Activated T-helper 1 cell treated with anti-CD3 and anti-CD28 coated beads, Interleukin-12 subunit alpha, Interleukin-12 subunit beta, Interleukin-2, Interleukin-4 antibody, amounts not matched to agents 30 ng/mL and 10 ng/mL and 1 ng/mL, durations not matched to agents 14 hours and 24 hours and 36 hours (primary cell): ENCODE measurements at regions of chr21 and their contacts with region 1.

Region 1: DNA sequence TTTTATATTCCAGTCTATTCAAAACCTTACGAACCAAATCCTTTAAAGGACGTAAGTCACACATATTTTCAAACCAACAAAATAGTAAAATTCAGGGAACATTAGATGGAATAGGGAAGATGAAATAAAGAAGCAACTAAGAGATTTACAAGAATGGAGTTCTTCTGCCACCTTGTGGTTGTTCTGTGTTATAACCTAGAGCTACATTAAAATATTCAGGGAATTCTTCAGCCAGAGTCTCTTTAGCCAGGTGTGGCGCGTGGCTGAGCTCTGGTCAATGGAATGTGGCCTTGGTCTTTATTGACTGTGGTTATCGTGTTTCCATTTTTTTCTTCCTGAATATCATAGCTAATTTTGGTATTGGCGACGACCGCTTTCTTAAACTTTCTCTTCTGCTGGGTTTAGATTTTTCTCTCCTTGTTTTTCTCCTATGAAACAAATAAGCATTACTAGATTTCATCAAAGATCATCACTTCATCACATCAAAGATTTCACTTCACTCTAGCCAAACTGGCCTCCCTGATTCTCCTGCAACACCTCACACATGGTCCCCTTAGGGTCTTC is 221.3 kb downstream of the MRPL39 start:
- DNase-seq: no peak
- H3K4me3 Mint-ChIP-seq: no peak overlapping the region
- H3K27ac Mint-ChIP-seq: no peak overlapping the region
- H3K4me1 Mint-ChIP-seq: peaks cover 9% of the 10 kb centered on the region
- H3K27me3 Mint-ChIP-seq: peaks cover 4% of the 10 kb centered on the region

Region 2: DNA sequence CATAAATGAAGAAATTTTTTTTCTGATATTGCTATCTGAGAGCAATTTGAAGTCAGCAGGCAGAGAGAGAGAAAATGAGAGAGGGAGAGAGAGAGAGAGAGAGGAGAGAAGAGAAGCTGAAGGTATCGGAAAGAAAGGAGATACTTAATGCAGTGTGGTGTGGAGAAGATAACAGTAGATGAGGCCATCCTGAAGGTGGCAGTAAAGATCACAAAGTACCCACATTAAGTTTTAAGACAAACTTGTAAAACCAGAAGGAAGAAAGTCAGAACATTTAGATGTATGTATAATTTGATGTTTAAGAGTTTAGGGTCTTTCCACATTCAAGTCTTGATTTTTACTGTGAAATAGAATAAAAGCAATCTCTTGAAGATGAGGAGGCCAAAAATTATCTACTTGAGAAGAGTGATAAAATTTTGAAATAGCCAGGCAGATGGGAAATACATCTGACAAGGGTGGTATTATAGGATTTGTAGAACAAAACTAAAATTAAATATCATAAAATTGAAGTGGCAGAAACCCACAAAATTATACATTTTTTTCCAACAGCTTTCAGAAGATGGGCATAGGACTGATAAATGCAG is 1532.1 kb before region 1 on chr21:
- intact Hi-C with region 1: loop called (anchors 5 kb)
- DNase-seq: no peak
- H3K4me3 Mint-ChIP-seq: no peak overlapping the region
- H3K27ac Mint-ChIP-seq: no peak overlapping the region
- H3K4me1 Mint-ChIP-seq: peaks cover 5% of the 10 kb centered on the region
- H3K27me3 Mint-ChIP-seq: peaks cover 8% of the 10 kb centered on the region

Region 3: GRCh38 chr21:24375201-24375600 is 1010.8 kb before region 1 on chr21:
- intact Hi-C with region 1: loop called (anchors 10 kb)
- DNase-seq: no peak
- H3K4me3 Mint-ChIP-seq: no peak overlapping the region
- H3K27ac Mint-ChIP-seq: no peak overlapping the region
- H3K4me1 Mint-ChIP-seq: no peaks in the 10 kb centered on the region
- H3K27me3 Mint-ChIP-seq: no peaks in the 10 kb centered on the region

Region 4: GRCh38 chr21:24844671-24845070 is 541.3 kb before region 1 on chr21:
- intact Hi-C with region 1: loop called (anchors 5 kb)
- DNase-seq: no peak
- H3K4me3 Mint-ChIP-seq: no peak overlapping the region
- H3K27ac Mint-ChIP-seq: no peak overlapping the region
- H3K4me1 Mint-ChIP-seq: no peaks in the 10 kb centered on the region
- H3K27me3 Mint-ChIP-seq: no peaks in the 10 kb centered on the region

Region 5: DNA sequence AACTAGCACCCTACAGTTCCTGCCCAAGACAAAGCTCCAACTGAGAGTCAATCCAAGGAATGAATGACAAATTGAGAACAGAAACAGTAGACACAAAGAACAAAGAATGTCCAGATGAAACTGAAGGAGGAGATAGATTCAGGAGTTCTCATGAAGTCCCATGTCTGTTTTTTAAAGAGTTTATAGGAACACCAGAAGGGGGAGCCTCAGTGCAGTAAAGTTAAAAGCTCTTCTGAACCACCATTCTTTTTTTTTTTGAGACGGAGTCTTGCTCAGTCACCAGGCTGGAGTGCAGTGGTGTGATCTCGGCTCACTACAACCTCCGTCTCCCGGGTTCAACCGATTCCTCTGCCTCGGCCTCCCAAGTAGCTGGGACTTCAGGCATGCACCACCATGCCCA is 102.3 kb before region 1 on chr21:
- intact Hi-C with region 1: loop called (anchors 1 kb)
- DNase-seq: no peak
- H3K4me3 Mint-ChIP-seq: no peak overlapping the region
- H3K27ac Mint-ChIP-seq: no peak overlapping the region
- H3K4me1 Mint-ChIP-seq: no peaks in the 10 kb centered on the region
- H3K27me3 Mint-ChIP-seq: peaks cover 4% of the 10 kb centered on the region